Activated CD4-positive, alpha-beta T cell treated with anti-CD3 and anti-CD28 coated beads for 36 hours (primary cell): ENCODE measurements at regions of chr1 and their contacts with region 1.

Region 1: DNA sequence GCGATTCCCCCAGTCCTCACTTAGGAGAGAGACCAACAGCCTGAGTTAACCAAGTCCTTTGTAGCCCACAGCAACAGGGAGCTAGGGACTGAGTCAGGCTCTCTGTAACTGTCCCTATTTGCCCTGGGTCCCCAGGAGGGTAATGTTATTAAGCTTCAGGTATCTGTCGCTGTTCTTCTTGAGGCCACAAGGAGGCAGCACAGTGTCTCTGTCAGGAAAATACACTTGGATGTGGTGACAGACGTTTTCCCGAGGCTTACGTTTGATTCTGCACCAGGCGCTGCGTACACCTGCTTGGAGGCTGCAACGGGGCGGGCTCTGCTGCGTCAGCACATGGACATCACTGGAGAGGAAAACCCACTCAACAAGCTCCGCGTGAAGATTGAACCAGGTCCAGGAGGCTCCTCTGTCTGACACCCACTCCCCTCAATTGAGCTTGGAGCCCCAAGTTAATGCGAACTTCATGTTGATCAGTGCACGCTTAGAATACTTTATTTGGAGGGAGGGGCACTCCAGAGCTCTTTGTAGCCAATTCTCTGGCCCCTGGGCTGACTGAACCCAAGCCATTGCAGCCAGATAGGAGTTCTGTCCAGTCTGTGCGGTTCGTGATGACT is 10.7 kb upstream of the ELF3 start:
- DNase-seq: peak; percentile 45
- ATAC-seq: peak; percentile 90
- H3K4me3 Mint-ChIP-seq: no peak overlapping the region
- H3K27ac Mint-ChIP-seq: no peak overlapping the region
- H3K4me1 Mint-ChIP-seq: no peaks in the 10 kb centered on the region
- H3K27me3 Mint-ChIP-seq: no peaks in the 10 kb centered on the region

Region 2: DNA sequence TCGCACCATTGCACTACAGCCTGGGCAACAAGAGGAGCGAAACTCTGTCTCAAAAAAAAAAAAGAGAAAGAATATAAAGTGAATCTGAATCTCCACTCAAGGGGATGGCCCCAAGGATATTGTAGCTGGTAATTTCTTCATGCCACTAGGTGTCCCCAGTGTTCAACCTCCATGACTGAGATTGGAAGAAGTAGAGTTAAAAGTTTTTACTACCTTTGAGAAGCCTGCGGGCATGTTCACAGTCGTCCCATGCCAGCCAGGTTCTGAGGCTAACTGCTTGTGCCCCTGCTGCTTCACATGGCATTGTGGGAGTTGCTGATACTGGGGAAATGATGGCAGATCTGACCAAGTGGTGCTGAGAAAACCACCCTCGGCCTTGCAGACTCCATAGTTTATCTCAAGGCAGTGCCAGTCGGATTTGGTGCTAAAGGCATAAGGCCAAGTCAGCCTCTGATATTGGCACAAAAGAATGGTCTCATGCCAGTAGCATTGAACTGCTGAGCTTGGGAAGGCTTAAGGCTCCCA is 121.8 kb before region 1 on chr1:
- CTCF ChIA-PET with region 1: interaction called, 10 read pairs
- POLR2A ChIA-PET with region 1: no interaction called
- intact Hi-C with region 1: no loop called
- DNase-seq: peak; percentile 44
- ATAC-seq: peak; percentile 77
- H3K4me3 Mint-ChIP-seq: no peak overlapping the region
- H3K27ac Mint-ChIP-seq: no peak overlapping the region
- H3K4me1 Mint-ChIP-seq: no peaks in the 10 kb centered on the region
- H3K27me3 Mint-ChIP-seq: no peaks in the 10 kb centered on the region

Region 3: GRCh38 chr1:201982623-201983379 is 16.9 kb before region 1 on chr1 and contains the start of gene RNPEP:
- CTCF ChIA-PET with region 1: interaction called, 20 read pairs
- POLR2A ChIA-PET with region 1: no interaction called
- intact Hi-C with region 1: no loop called
- DNase-seq: peak; percentile 69
- ATAC-seq: peak; percentile 82
- H3K4me3 Mint-ChIP-seq: peak within 1 kb of the TSS; percentile 86
- H3K27ac Mint-ChIP-seq: peak within 1 kb of the TSS; percentile 80
- H3K4me1 Mint-ChIP-seq: peaks cover 16% of the 10 kb centered on the region
- H3K27me3 Mint-ChIP-seq: no peaks in the 10 kb centered on the region
- total RNA-seq, gene RNPEP: 44.9 to 49.2 TPM

Region 4: GRCh38 chr1:202112839-202113672 is 113.3 kb after region 1 on chr1:
- CTCF ChIA-PET with region 1: interaction called, 10 read pairs
- POLR2A ChIA-PET with region 1: no interaction called
- intact Hi-C with region 1: no loop called
- DNase-seq: no peak
- ATAC-seq: no peak
- H3K4me3 Mint-ChIP-seq: no peak overlapping the region
- H3K27ac Mint-ChIP-seq: no peak overlapping the region
- H3K4me1 Mint-ChIP-seq: no peaks in the 10 kb centered on the region
- H3K27me3 Mint-ChIP-seq: no peaks in the 10 kb centered on the region

Region 5: DNA sequence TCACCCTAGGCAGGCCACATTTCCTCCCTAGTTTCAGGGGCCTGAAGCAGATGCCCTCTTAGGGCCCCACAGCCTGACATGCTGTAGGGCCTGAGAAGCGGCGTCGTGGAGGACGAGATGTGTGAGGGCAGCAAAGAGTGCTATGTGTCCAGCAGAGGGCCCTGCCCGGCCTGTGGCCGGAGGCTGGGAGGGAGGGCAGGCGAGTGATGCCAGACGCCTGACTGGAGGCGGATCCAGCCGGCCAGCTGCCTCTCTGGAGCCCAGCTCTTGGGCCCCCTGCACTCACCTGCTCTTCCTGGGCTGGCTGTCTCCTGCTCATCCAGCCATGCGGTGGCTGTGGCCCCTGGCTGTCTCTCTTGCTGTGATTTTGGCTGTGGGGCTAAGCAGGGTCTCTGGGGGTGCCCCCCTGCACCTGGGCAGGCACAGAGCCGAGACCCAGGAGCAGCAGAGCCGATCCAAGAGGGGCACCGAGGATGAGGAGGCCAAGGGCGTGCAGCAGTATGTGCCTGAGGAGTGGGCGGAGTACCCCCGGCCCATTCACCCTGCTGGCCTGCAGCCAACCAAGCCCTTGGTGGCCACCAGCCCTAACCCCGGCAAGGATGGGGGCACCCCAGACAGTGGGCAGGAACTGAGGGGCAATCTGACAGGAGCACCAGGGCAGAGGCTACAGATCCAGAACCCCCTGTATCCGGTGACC is 123.1 kb after region 1 on chr1 and contains the start of gene GPR37L1:
- CTCF ChIA-PET with region 1: interaction called, 8 read pairs
- POLR2A ChIA-PET with region 1: no interaction called
- intact Hi-C with region 1: loop called in 1 of 2 experiments (anchors 1 kb)
- DNase-seq: no peak
- ATAC-seq: no peak
- H3K4me3 Mint-ChIP-seq: no peak within 1 kb of the TSS
- H3K27ac Mint-ChIP-seq: no peak within 1 kb of the TSS
- H3K4me1 Mint-ChIP-seq: no peaks in the 10 kb centered on the region
- H3K27me3 Mint-ChIP-seq: no peaks in the 10 kb centered on the region
- total RNA-seq, gene GPR37L1: not detected

Region 6: GRCh38 chr1:202135221-202135721 is 135.5 kb after region 1 on chr1:
- CTCF ChIA-PET with region 1: interaction called, 38 read pairs
- POLR2A ChIA-PET with region 1: no interaction called
- intact Hi-C with region 1: loop called in 1 of 2 experiments (anchors 2 kb)
- DNase-seq: peak; percentile 70
- ATAC-seq: peak; percentile 87
- H3K4me3 Mint-ChIP-seq: no peak overlapping the region
- H3K27ac Mint-ChIP-seq: no peak overlapping the region
- H3K4me1 Mint-ChIP-seq: no peaks in the 10 kb centered on the region
- H3K27me3 Mint-ChIP-seq: no peaks in the 10 kb centered on the region

Region 7: DNA sequence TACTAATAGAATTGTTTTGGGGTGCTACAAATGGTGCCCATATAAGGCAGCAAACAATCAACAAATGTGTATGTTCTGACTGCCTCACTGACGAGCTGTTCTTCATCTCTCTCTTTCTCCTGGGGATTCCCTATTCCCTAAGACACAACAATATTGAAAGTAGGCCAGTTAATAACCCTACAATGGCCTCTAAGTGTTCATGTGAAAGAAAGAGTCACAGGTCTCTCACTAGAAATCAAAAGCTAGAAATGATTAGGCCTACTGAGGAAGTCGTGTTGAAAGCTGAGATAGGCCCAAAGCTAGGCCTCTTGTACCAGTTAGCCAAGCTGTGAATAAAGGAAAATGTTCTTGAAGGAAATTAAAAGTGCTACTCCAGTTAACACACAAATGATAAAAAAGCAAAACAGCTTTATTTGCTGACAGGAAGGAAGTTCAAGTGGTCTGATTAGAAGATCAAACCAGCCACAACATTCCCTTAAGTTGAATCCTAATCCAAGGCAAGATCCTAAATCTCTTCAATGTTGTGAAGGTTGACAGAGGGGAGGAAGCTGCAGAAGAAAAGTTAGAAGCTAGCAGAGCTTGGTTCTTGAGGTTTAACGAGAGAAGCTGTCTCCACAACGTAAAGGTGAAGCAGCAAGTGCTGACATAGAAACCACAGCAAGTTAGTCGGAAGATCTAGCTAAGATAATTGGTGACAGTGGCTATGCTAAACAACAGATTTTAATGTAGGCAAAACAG is 1653.2 kb after region 1 on chr1:
- CTCF ChIA-PET with region 1: no interaction called
- POLR2A ChIA-PET with region 1: no interaction called
- intact Hi-C with region 1: no loop called
- DNase-seq: peak; percentile 40
- ATAC-seq: peak; percentile 75
- H3K4me3 Mint-ChIP-seq: peak overlapping the region; percentile 34
- H3K27ac Mint-ChIP-seq: peak overlapping the region; percentile 98
- H3K4me1 Mint-ChIP-seq: peaks cover 86% of the 10 kb centered on the region
- H3K27me3 Mint-ChIP-seq: no peaks in the 10 kb centered on the region